GM12878 (cell line): ENCODE measurements at regions of chr5 and their contacts with region 1.

Region 1: GRCh38 chr5:42908509-42909488 is 97.1 kb upstream of the SELENOP start:
- DNase-seq: peak; percentile 51
- ATAC-seq: peak; percentile 97
- H3K4me3 ChIP-seq: peak overlapping the region; percentile 62; the same call in 1 of the 2 replicates
- H3K27ac ChIP-seq: no peak overlapping the region
- H3K4me1 ChIP-seq: peaks cover 4% of the 10 kb centered on the region; the same call in 1 of the 2 replicates
- H3K27me3 ChIP-seq: no peaks in the 10 kb centered on the region; a peak in 1 of 4 replicates
- CTCF ChIP-seq: peak; percentile 80 to 91 (median 87)
- EP300 ChIP-seq: no peak
- POLR2A ChIP-seq: no peak
- RAD21 ChIP-seq: peak; percentile 70

Region 2: GRCh38 chr5:42701351-42702059 is 207.3 kb before region 1 on chr5:
- CTCF ChIA-PET with region 1: no interaction called
- POLR2A ChIA-PET with region 1: no interaction called
- RAD21 ChIA-PET with region 1: no interaction called
- SMC1A ChIA-PET with region 1: no interaction called
- in situ Hi-C with region 1: no loop called
- intact Hi-C with region 1: no loop called
- DNase-seq: no peak
- ATAC-seq: no peak
- H3K4me3 ChIP-seq: no peak overlapping the region
- H3K27ac ChIP-seq: no peak overlapping the region
- H3K4me1 ChIP-seq: no peaks in the 10 kb centered on the region
- H3K27me3 ChIP-seq: no peaks in the 10 kb centered on the region
- CTCF ChIP-seq: no peak
- EP300 ChIP-seq: no peak
- POLR2A ChIP-seq: no peak
- RAD21 ChIP-seq: no peak

Region 3: GRCh38 chr5:42950440-42951292 is 41.9 kb after region 1 on chr5:
- CTCF ChIA-PET with region 1: interaction called, 18 read pairs
- POLR2A ChIA-PET with region 1: interaction called, 4 read pairs
- RAD21 ChIA-PET with region 1: interaction called, 12 read pairs
- SMC1A ChIA-PET with region 1: interaction called, 9 read pairs
- in situ Hi-C with region 1: no loop called
- intact Hi-C with region 1: loop called (anchors 2 kb)
- DNase-seq: peak; percentile 32
- ATAC-seq: peak; percentile 48
- H3K4me3 ChIP-seq: peak overlapping the region; percentile 62
- H3K27ac ChIP-seq: peak overlapping the region; percentile 51
- H3K4me1 ChIP-seq: peaks cover 13% of the 10 kb centered on the region
- H3K27me3 ChIP-seq: no peaks in the 10 kb centered on the region; a peak in 1 of 4 replicates
- CTCF ChIP-seq: no peak
- EP300 ChIP-seq: no peak
- POLR2A ChIP-seq: no peak; the same call in 1 of the 2 replicates
- RAD21 ChIP-seq: no peak

Region 4: DNA sequence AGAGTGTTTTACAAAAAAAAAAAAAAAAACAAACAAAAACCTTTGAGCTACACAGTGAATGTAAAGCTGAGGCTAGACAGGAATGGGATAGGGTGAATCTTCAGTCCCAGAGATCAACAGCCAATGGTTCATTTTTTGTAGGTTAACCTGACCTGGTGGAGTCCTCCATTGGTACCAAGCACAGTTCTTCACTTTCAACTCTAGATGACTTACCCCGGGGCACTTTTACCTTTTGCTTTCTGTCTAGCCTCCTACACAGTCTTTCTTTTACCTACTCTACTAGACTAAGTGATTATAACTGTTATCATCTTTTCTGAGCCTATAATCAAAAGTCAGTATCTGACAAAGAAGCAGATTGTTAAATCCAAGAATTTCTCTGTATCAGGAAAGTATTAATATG is 80.4 kb after region 1 on chr5:
- CTCF ChIA-PET with region 1: interaction called, 16 read pairs
- POLR2A ChIA-PET with region 1: no interaction called
- RAD21 ChIA-PET with region 1: interaction called, 36 read pairs
- SMC1A ChIA-PET with region 1: interaction called, 12 read pairs
- in situ Hi-C with region 1: no loop called
- intact Hi-C with region 1: loop called (anchors 2 kb)
- DNase-seq: no peak
- ATAC-seq: no peak
- H3K4me3 ChIP-seq: no peak overlapping the region
- H3K27ac ChIP-seq: no peak overlapping the region
- H3K4me1 ChIP-seq: peaks cover 7% of the 10 kb centered on the region
- H3K27me3 ChIP-seq: no peaks in the 10 kb centered on the region
- CTCF ChIP-seq: no peak
- EP300 ChIP-seq: no peak
- POLR2A ChIP-seq: no peak
- RAD21 ChIP-seq: no peak

Region 5: DNA sequence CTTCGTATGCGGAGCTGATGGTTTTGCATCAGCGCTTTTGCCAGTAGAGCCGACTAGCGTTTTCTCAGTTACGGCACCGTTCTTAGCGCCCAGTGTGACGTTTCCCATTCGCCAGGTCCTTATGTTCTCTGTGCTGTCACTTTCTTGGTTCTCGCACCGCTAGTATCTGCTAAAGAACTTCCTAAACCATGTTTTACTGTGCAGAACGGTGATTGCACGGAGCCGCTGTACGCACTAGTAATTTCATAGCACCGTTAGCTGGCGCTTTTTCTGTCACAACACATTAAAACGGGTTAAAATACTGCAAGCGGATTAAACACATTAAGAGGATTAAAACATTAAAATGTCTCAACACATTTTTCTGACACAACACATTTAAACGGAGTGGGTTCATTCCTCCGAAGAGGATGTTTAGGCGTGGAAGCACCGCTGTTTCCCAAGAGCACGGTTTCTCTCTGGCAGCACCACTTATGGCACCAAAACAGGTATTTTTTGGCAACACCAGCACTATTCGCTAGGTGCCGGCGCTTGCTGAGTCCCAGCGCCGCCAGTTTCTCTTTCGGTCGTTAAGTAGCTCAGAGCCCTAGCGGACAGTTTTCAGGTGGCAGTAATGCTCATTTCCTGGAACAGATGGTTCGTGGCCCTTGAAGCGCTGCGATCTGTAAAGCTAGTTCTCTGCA is 111.0 kb after region 1 on chr5:
- CTCF ChIA-PET with region 1: interaction called, 15 read pairs
- POLR2A ChIA-PET with region 1: no interaction called
- RAD21 ChIA-PET with region 1: interaction called, 13 read pairs
- SMC1A ChIA-PET with region 1: interaction called, 10 read pairs
- in situ Hi-C with region 1: no loop called
- intact Hi-C with region 1: no loop called
- DNase-seq: no peak
- ATAC-seq: peak; percentile 78
- H3K4me3 ChIP-seq: peak overlapping the region; percentile 83
- H3K27ac ChIP-seq: peak overlapping the region; percentile 94
- H3K4me1 ChIP-seq: peaks cover 16% of the 10 kb centered on the region
- H3K27me3 ChIP-seq: no peaks in the 10 kb centered on the region
- CTCF ChIP-seq: peak; percentile 42 to 73 (median 59)
- EP300 ChIP-seq: no peak
- POLR2A ChIP-seq: peak; percentile 57
- RAD21 ChIP-seq: peak; percentile 40; the same call in 1 of the 2 replicates

Region 6: GRCh38 chr5:43066799-43067741 is 158.3 kb after region 1 on chr5:
- CTCF ChIA-PET with region 1: interaction called, 9 read pairs
- POLR2A ChIA-PET with region 1: interaction called, 3 read pairs
- RAD21 ChIA-PET with region 1: interaction called, 5 read pairs
- SMC1A ChIA-PET with region 1: interaction called, 3 read pairs
- in situ Hi-C with region 1: no loop called
- intact Hi-C with region 1: loop called (anchors 5 kb)
- DNase-seq: peak; percentile 74
- ATAC-seq: peak; percentile 58
- H3K4me3 ChIP-seq: peak overlapping the region; percentile 91
- H3K27ac ChIP-seq: peak overlapping the region; percentile 100
- H3K4me1 ChIP-seq: peaks cover 10% of the 10 kb centered on the region
- H3K27me3 ChIP-seq: no peaks in the 10 kb centered on the region
- CTCF ChIP-seq: no peak
- EP300 ChIP-seq: peak in 1 of 2 experiments; percentile 100; a peak in 2 of 4 replicates
- POLR2A ChIP-seq: peak; percentile 47; the same call in 1 of the 2 replicates
- RAD21 ChIP-seq: no peak

Region 7: DNA sequence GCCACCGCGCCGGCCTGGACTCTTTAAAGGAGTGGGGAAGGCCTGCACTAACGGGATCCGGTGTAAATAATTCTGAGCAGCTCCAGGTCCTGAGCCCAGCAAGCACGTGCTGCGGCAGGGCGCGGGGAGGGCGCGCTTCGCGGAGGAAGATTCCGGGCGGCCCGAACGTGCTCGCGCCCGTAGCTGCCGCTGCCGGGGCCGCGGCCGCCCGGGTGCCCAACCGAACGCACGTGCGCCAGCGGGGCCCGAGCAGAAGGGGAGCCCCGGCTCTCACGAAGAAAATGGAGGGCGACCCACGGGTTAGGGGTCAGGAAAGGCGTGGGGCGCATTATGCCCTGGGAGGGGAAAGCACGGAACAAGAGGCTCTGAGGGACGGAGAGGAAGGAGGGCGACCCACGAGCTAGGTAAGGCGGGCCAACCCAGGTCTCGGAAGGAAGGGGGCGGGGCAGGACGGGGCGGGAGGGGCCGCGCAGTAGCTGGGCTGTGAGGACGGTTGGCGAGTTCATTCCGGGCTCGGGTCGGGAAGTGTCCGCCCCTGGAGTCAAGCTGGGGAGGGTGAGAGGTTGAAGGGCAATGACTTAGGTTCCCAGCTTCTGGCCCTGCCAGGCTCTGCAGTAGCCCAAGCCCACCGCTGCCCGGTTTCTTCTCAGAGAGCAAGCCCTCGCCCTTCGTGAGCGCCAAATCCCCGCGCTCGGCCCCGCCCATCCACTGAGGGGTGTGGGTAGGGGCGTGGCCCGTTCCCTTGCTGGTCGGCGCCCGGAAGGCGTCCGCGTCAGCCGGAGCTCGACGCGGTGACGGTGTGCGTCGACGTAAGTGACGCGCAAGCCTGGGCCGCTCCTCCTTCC is 212.1 kb after region 1 on chr5 and contains the start of gene ZNF131:
- CTCF ChIA-PET with region 1: interaction called, 10 read pairs
- POLR2A ChIA-PET with region 1: no interaction called
- RAD21 ChIA-PET with region 1: interaction called, 8 read pairs
- SMC1A ChIA-PET with region 1: no interaction called
- in situ Hi-C with region 1: no loop called
- intact Hi-C with region 1: no loop called
- DNase-seq: peak; percentile 87
- ATAC-seq: peak; percentile 93
- H3K4me3 ChIP-seq: peak within 1 kb of the TSS; percentile 96
- H3K27ac ChIP-seq: peak within 1 kb of the TSS; percentile 94
- H3K4me1 ChIP-seq: peaks cover 10% of the 10 kb centered on the region
- H3K27me3 ChIP-seq: peaks cover 0 to 1% of the 10 kb centered on the region in 2 experiments; a peak in 1 of 4 replicates
- CTCF ChIP-seq: no peak
- EP300 ChIP-seq: peak in 1 of 2 experiments; percentile 25; a peak in 1 of 4 replicates
- POLR2A ChIP-seq: peak; percentile 87
- RAD21 ChIP-seq: no peak
- polyA plus RNA-seq, gene ZNF131: 16.4 to 23.3 TPM